Psoas muscle (tissue), 8 donors: ENCODE measurements at regions of chr1 and their contacts with region 1.

Region 1: GRCh38 chr1:92817986-92818764 is 13.7 kb upstream of the RPL5 start:
- DNase-seq: no peak
- ATAC-seq: peak in 2 of 4 donors; percentile 46 to 67
- H3K4me3 ChIP-seq: no peak overlapping the region
- H3K27ac ChIP-seq: no peak overlapping the region
- H3K4me1 ChIP-seq: no peaks in the 10 kb centered on the region
- H3K27me3 ChIP-seq: no peaks in the 10 kb centered on the region
- CTCF ChIP-seq: peak; percentile 61

Region 2: DNA sequence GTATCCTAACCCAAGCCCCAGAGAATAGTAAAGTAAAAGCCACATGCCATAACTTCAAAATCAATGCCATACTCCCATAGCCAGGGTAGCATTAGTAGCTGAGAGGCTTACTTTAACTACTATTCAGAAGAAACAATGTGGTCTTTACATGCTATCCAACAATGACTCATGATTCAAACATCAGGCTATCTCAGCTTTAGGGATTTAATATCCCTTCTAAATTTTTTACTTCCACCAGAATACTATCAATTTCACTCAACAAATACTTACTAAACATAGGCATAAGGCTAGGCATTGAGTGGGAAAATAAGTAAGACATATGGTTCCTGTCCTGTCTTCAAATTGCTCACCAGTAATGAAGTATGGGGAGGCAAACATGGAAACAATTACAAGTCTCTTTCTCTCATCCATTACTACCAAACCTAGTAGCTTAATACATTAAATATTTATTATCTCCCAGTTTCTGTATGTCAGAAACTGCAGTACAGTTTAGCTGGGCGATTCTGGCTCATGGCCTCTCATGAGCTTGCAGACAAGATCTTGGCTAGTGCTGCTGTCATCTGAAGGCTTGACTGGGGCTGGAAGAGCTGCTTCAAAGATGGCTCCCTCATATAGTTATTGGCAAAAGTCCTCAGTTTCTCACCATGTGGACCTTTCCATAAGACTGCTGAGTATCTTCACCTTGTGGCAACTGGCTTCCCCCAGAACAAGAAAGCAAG is 64.0 kb before region 1 on chr1:
- intact Hi-C with region 1: loop called (anchors 5 kb)
- DNase-seq: no peak
- ATAC-seq: no peak
- H3K4me3 ChIP-seq: no peak overlapping the region
- H3K27ac ChIP-seq: no peak overlapping the region
- H3K4me1 ChIP-seq: peaks cover 15% of the 10 kb centered on the region
- H3K27me3 ChIP-seq: no peaks in the 10 kb centered on the region
- CTCF ChIP-seq: no peak

Region 3: GRCh38 chr1:92960395-92961130 is 142.4 kb after region 1 on chr1:
- intact Hi-C with region 1: no loop called
- DNase-seq: peak; percentile 43 to 64
- ATAC-seq: peak; percentile 78 to 85 (median 80)
- H3K4me3 ChIP-seq: peak overlapping the region; percentile 85
- H3K27ac ChIP-seq: peak overlapping the region; percentile 91
- H3K4me1 ChIP-seq: peaks cover 30% of the 10 kb centered on the region
- H3K27me3 ChIP-seq: no peaks in the 10 kb centered on the region
- CTCF ChIP-seq: peak; percentile 65